Activated naive CD8-positive, alpha-beta T cell treated with anti-CD3 and anti-CD28 coated beads, Interleukin-2, amount 10 ng/mL, durations not matched to agents 7 days and 5 days (primary cell): ENCODE measurements at regions of chr22 and their contacts with region 1.

Region 1: DNA sequence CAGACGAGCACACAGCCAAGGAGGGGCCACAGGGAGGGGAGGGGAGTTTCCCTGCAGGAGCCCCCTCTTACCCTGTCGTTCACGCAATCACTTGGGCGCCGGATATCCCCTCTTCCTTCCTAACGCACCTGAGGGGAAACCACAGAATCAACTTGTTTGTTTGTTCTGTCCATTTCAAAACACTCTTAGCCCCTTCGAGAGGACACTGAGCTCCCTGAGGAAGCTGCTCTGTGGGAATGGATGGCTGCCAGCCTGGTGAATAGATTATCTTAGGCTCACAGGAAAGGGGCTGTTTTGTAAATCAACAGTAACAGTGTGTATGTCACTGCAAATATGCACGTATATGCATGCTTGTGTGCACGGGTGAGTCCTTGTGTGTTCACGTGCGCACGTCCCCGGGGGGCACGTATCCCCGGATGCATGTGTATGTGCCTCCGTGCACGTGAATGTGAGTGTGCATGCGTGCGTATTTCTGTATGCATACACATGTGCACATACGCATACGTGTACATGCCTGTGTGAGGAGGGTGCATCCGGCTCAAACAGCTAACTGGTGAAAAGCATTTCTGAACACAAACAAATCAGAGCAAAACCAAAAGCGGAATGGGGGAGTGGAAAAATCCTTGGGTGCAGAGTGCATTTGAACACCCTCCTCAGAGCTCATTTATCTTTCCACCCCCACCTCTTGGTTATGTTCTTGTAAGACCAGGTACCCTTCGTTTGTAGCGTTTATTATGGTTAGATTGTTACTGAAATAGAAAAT is 7.2 kb downstream of the ARSA start:
- DNase-seq: peak; percentile 73
- ATAC-seq: peak; percentile 63
- H3K4me3 Mint-ChIP-seq: peak overlapping the region; percentile 84
- H3K27ac Mint-ChIP-seq: peak overlapping the region; percentile 99
- H3K4me1 Mint-ChIP-seq: peaks cover 42% of the 10 kb centered on the region
- H3K27me3 Mint-ChIP-seq: no peaks in the 10 kb centered on the region

Region 2: GRCh38 chr22:50250555-50251476 is 370.0 kb before region 1 on chr22 and contains the start of gene HDAC10:
- POLR2A ChIA-PET with region 1: interaction called, 10 read pairs
- DNase-seq: peak; percentile 90
- ATAC-seq: peak; percentile 83
- H3K4me3 Mint-ChIP-seq: peak within 1 kb of the TSS; percentile 87
- H3K27ac Mint-ChIP-seq: peak within 1 kb of the TSS; percentile 84
- H3K4me1 Mint-ChIP-seq: peaks cover 7% of the 10 kb centered on the region
- H3K27me3 Mint-ChIP-seq: no peaks in the 10 kb centered on the region
- total RNA-seq, gene HDAC10: 99.1 to 111 TPM

Region 3: GRCh38 chr22:50507991-50508884 is 112.5 kb before region 1 on chr22 and contains the start of gene NCAPH2:
- POLR2A ChIA-PET with region 1: interaction called, 28 read pairs
- DNase-seq: peak; percentile 98
- ATAC-seq: peak; percentile 72
- H3K4me3 Mint-ChIP-seq: peak within 1 kb of the TSS; percentile 97
- H3K27ac Mint-ChIP-seq: peak within 1 kb of the TSS; percentile 92
- H3K4me1 Mint-ChIP-seq: peaks cover 14% of the 10 kb centered on the region
- H3K27me3 Mint-ChIP-seq: no peaks in the 10 kb centered on the region
- total RNA-seq, gene NCAPH2: 126 TPM

Region 4: GRCh38 chr22:50544078-50544745 is 76.6 kb before region 1 on chr22:
- POLR2A ChIA-PET with region 1: interaction called, 73 read pairs
- DNase-seq: peak; percentile 92
- ATAC-seq: peak; percentile 65
- H3K4me3 Mint-ChIP-seq: peak overlapping the region; percentile 77
- H3K27ac Mint-ChIP-seq: peak overlapping the region; percentile 98
- H3K4me1 Mint-ChIP-seq: peaks cover 51% of the 10 kb centered on the region
- H3K27me3 Mint-ChIP-seq: no peaks in the 10 kb centered on the region

Region 5: DNA sequence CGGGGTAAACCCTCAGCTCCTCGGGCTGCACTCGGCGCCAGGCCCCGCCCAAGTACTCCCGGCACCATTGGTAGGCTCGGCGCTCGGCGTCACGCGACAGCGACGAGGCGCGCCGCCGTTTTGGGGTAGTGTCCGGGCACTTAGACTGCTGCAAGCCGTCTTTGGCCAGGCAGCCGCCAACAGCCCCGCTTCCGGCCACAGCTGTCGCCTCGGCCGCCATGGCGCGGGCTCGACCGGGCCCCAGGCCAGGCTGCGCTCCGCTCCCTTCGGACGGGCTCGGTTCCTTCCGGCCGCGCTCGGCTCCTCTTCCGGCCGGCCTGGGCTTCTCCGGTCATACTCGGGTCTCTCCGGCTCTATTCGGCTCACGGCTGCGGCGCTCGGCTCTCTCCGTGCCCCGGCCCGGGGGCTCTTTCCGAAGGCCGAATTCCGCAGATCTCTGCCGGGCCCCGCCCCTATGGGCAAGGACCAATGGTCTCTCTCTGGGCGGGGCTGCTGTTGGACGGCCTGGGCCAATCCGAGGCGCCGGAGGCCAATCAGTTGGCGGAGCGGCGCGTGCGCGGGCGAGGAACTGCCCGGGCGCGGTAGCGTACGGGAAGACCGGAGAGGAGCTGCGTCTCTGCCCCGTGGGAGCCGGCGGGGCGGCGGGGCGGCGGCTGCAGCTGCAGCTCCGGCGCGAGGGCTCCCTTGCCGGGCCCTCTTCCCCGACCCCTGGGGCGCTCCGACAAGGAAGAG is 38.0 kb before region 1 on chr22 and contains the start of gene CHKB:
- POLR2A ChIA-PET with region 1: interaction called, 23 read pairs
- DNase-seq: peak; percentile 98
- ATAC-seq: peak; percentile 94
- H3K4me3 Mint-ChIP-seq: peak within 1 kb of the TSS; percentile 99
- H3K27ac Mint-ChIP-seq: peak within 1 kb of the TSS; percentile 96
- H3K4me1 Mint-ChIP-seq: peaks cover 19% of the 10 kb centered on the region
- H3K27me3 Mint-ChIP-seq: no peaks in the 10 kb centered on the region
- total RNA-seq, gene CHKB: 132 to 137 TPM